B cell (primary cell): ENCODE measurements at regions of chr13 and their contacts with region 1.

Region 1: GRCh38 chr13:50512474-50513299 is 330.8 kb downstream of the DLEU7 start:
- DNase-seq: peak; percentile 72
- ATAC-seq: peak; percentile 84
- H3K4me3 ChIP-seq: peak overlapping the region; percentile 25 to 71 (median 47)
- H3K4me3 Mint-ChIP-seq: no peak overlapping the region
- H3K27ac ChIP-seq: peak overlapping the region; percentile 76 to 92
- H3K27ac Mint-ChIP-seq: no peak overlapping the region
- H3K4me1 ChIP-seq: peaks cover 22 to 32% of the 10 kb centered on the region in 2 donors
- H3K4me1 Mint-ChIP-seq: no peaks in the 10 kb centered on the region
- H3K27me3 ChIP-seq: no peaks in the 10 kb centered on the region
- H3K27me3 Mint-ChIP-seq: no peaks in the 10 kb centered on the region
- CTCF ChIP-seq: no peak

Region 2: DNA sequence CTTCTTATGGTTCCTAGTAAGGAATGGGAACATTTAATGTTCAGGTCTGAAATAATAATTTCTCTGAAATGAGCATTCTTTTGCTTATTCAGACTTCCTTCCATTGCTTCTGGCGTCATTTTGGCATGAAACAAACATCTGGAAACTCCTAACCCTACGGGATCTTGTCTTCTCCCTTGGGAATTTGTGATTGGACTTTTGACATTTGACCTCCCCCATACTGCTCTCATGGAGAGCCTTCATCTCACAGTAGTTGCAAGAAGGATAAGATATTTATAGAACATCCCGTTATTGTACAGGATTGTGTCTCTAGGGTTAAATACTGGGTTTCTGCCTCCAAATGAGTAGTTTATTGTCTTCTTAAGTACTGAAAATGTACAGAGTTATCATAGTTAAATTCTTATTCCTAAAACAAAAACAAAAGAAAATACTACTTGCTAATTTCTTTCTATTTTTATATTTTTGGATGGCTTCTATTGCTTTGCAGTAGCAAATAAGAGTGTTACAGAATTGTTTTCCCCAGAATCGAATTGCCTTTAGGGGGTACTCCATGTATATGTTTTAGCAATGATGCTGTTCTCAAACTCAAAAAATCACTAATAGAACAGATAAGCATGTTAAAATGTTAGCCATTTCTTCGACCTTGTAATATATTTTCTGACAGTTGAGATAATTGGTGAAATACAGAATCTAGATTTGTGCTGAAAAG is 36.0 kb before region 1 on chr13:
- CTCF ChIA-PET with region 1: interaction called, 6 read pairs
- POLR2A ChIA-PET with region 1: no interaction called
- intact Hi-C with region 1: loop called (anchors 5 kb)
- DNase-seq: no peak
- ATAC-seq: no peak
- H3K4me3 ChIP-seq: no peak overlapping the region
- H3K4me3 Mint-ChIP-seq: no peak overlapping the region
- H3K27ac ChIP-seq: no peak overlapping the region
- H3K27ac Mint-ChIP-seq: no peak overlapping the region
- H3K4me1 ChIP-seq: peaks cover 0 to 8% of the 10 kb centered on the region in 2 donors
- H3K4me1 Mint-ChIP-seq: peaks cover 10% of the 10 kb centered on the region
- H3K27me3 ChIP-seq: no peaks in the 10 kb centered on the region
- H3K27me3 Mint-ChIP-seq: no peaks in the 10 kb centered on the region
- CTCF ChIP-seq: no peak

Region 3: DNA sequence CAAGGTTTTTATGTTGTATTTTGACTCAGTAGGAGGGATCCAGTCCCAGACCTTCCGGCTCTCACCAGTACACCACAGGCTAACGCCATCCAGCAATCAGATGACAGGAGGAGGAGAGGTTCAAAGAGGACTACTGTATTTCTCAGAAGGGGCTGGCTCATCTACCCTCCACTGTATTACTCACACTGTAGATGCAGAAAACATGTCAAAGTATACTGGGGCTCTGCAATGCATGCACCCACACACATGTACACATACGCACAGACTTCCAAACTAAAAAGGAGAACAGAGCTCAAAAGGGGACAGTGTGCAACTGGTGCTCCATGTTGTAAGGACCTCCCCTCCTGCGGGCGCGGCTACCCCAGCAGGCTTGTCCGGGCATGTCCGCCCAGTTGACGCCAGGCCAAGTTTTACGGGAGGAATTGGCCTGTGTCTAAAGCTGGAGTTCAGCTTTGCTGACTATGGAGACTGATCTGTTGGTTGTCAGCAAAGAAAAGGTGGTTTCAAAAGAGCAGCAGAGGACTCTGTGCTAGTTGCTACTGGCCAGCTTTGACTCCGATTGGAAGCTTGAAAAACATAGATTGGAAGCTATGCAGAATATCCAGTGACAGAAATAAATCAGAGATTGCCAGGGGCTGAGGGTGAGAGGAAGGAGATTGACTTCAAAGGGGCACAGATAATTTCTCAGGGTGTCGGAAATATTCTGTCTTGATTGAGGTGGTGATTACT is 16.6 kb after region 1 on chr13:
- CTCF ChIA-PET with region 1: interaction called, 10 read pairs
- POLR2A ChIA-PET with region 1: interaction called, 3 read pairs
- intact Hi-C with region 1: no loop called
- DNase-seq: no peak
- ATAC-seq: no peak
- H3K4me3 ChIP-seq: no peak overlapping the region
- H3K4me3 Mint-ChIP-seq: no peak overlapping the region
- H3K27ac ChIP-seq: no peak overlapping the region
- H3K27ac Mint-ChIP-seq: no peak overlapping the region
- H3K4me1 ChIP-seq: peaks cover 24 to 25% of the 10 kb centered on the region in 2 donors
- H3K4me1 Mint-ChIP-seq: peaks cover 35% of the 10 kb centered on the region
- H3K27me3 ChIP-seq: no peaks in the 10 kb centered on the region
- H3K27me3 Mint-ChIP-seq: no peaks in the 10 kb centered on the region
- CTCF ChIP-seq: no peak